ENCODE measurements at regions of chr3 and their contacts with region 1.

Region 1: GRCh38 chr3:146577662-146578061 is 27.5 kb downstream of the PLSCR5 start:
- DNase-seq: no peak
- ATAC-seq: no peak
- H3K4me3 ChIP-seq: no peak overlapping the region
- H3K27ac ChIP-seq: no peak overlapping the region
- H3K4me1 ChIP-seq: no peaks in the 10 kb centered on the region
- H3K27me3 ChIP-seq: no peaks in the 10 kb centered on the region

Region 2: GRCh38 chr3:146200461-146201220 is 377.0 kb before region 1 on chr3:
- intact Hi-C with region 1: loop called in 1 of 2 experiments (anchors 10 kb)
- DNase-seq: no peak
- ATAC-seq: no peak
- H3K4me3 ChIP-seq: no peak overlapping the region
- H3K27ac ChIP-seq: no peak overlapping the region
- H3K4me1 ChIP-seq: peaks cover 0 to 1% of the 10 kb centered on the region in 2 donors
- H3K27me3 ChIP-seq: no peaks in the 10 kb centered on the region

Region 3: DNA sequence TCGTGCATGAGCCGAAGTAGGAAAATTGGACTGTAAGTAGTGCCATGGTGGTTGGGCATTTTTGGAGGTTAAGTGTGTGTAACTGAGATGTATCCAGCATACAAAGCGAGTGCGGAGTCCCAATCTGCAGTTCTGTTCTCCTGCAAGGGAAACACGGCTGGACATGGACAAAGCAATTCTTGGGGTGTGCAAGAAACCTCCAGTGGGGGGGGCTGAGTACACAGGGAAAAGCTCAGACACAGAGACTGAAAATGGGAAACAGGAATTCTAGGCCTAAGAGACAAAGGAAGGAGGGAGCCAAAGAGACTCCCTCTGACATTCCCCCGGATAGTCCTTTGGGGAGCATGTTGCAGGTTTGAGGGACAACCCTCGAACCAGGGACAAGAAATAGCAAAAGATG is 243.5 kb before region 1 on chr3:
- intact Hi-C with region 1: loop called (anchors 10 kb)
- DNase-seq: no peak
- ATAC-seq: no peak
- H3K4me3 ChIP-seq: no peak overlapping the region
- H3K27ac ChIP-seq: no peak overlapping the region
- H3K4me1 ChIP-seq: no peaks in the 10 kb centered on the region
- H3K27me3 ChIP-seq: no peaks in the 10 kb centered on the region

Region 4: DNA sequence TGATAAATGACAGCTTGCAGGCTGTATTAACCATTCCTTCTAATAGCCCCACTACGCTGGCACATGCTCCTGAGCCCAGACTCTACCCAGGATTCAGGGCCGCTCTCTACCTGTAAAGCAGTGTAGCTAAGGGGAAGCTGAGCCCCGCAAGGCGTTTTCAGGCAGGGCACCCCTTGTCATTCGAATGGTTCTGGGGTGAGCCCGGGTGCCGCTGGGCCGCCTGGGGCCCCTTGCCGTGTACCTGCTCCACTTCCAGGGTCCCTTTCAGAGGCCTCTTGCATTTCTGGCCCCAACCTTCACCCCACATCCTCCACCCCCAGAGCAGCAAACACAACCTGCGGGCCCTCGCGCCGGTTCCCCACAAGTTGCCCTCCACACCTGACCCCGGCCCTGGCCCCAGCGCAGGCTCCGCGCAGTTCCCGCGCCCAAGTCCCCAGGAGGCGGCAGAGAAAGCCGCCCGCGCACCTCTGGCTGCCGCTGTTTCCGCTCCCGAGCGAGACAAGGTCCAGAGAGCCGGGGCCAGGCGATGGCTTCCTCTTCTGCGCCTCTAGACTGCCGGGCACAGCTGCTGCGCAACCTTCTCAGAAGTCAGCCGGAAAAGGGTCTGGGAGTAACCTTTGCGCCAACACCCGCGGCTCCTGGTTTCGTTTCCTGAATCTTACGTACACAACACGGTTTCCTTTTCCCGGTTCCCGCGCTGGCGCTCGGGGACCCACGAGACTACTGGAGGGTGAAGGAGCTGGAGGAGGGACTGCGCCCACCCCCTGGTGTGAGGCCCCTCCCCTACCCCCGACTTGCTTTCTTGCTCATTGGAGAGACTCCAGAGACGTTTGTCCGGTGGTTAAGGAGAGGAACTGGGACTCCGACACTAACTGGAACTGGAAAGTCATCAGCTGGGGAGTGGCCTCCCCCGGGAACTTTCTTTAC is 33.4 kb before region 1 on chr3 and contains the start of gene PLSCR1:
- intact Hi-C with region 1: no loop called
- DNase-seq: peak; percentile 97 to 98
- ATAC-seq: peak; percentile 94
- H3K4me3 ChIP-seq: peak within 1 kb of the TSS; percentile 61
- H3K27ac ChIP-seq: peak within 1 kb of the TSS; percentile 72 to 76
- H3K4me1 ChIP-seq: no peaks in the 10 kb centered on the region
- H3K27me3 ChIP-seq: no peaks in the 10 kb centered on the region
- total RNA-seq, gene PLSCR1: 149 to 193 TPM

Region 5: DNA sequence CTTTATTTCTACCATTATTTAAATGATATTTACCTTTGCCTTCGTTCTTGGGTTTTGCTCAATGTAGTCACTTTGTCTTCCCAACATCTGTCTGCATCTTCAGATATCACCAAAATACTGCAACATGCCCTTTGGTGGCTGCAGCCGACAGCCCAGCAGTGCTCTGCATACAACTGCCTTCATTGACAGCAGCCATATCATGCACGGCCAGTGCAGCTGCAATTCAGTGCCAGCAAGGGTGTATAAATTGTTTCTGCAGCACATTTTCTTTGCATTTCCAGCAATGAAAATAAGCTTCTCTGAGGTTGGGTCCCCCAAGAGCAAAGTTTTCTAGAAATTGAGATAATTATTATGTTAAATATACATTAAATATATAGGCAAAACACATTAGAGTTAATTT is 33.4 kb after region 1 on chr3:
- intact Hi-C with region 1: no loop called
- DNase-seq: no peak
- ATAC-seq: no peak
- H3K4me3 ChIP-seq: no peak overlapping the region
- H3K27ac ChIP-seq: no peak overlapping the region
- H3K4me1 ChIP-seq: no peaks in the 10 kb centered on the region
- H3K27me3 ChIP-seq: no peaks in the 10 kb centered on the region

Measured in aorta (tissue), 5 donors.